ENCODE measurements at regions of chr1 and their contacts with region 1.

Region 1: DNA sequence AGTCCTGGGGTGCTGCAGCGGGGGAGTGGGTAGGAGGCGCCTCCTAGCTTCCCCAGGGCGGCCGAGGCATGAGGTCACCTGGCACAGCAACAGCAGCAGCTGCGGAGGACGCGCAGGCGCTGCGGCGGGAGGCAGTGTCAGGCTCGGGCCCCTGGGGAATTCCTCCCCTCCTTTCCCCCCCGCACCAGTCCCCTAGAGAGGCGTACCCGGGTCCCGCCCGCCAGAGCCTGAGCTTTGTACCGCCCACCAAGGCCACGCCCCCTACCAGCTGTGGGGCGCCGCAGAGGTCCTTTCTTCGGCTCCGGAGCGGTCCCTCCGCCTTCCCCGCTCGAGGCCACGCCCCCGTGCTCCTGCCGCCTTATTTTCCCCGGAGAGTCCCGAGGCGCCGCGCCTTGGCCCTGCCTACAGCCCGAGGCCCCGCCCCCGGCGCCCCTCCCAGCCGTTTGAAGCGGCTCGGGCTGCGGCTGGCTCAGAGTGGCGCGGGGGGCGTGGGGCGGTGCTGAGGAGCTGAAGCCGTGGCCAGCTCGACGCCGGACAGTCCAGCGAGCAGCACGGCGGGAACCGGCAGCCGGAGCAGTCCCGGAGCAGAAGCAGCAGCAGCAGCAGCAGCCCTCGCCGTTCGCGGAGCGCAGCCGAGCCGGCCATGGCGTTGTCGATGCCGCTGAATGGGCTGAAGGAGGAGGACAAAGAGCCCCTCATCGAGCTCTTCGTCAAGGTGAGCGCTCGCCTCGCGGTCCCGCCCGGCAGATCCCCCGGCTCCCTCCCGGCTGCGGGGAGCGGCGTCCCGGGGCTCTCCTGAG is at the start of gene CLIC4:
- DNase-seq: peak; percentile 99
- H3K4me3 Mint-ChIP-seq: peak within 1 kb of the TSS; percentile 72
- H3K27ac Mint-ChIP-seq: peak within 1 kb of the TSS; percentile 64
- H3K4me1 Mint-ChIP-seq: peaks cover 23% of the 10 kb centered on the region
- H3K27me3 Mint-ChIP-seq: no peaks in the 10 kb centered on the region
- CTCF ChIP-seq: no peak
- total RNA-seq, gene CLIC4: 45.2 and 62.7 TPM in 2 replicates

Region 2: GRCh38 chr1:24713083-24713831 is 31.9 kb before region 1 on chr1:
- CTCF ChIA-PET with region 1: no interaction called
- intact Hi-C with region 1: no loop called
- DNase-seq: no peak
- H3K4me3 Mint-ChIP-seq: no peak overlapping the region
- H3K27ac Mint-ChIP-seq: no peak overlapping the region
- H3K4me1 Mint-ChIP-seq: no peaks in the 10 kb centered on the region
- H3K27me3 Mint-ChIP-seq: no peaks in the 10 kb centered on the region
- CTCF ChIP-seq: no peak

Region 3: GRCh38 chr1:24830680-24831272 is 85.7 kb after region 1 on chr1:
- CTCF ChIA-PET with region 1: interaction called, 9 read pairs
- intact Hi-C with region 1: loop called (anchors 5 kb)
- DNase-seq: no peak
- H3K4me3 Mint-ChIP-seq: no peak overlapping the region
- H3K27ac Mint-ChIP-seq: no peak overlapping the region
- H3K4me1 Mint-ChIP-seq: no peaks in the 10 kb centered on the region
- H3K27me3 Mint-ChIP-seq: no peaks in the 10 kb centered on the region
- CTCF ChIP-seq: peak; percentile 54